ENCODE measurements at regions of chr19 and their contacts with region 1.

Region 1: DNA sequence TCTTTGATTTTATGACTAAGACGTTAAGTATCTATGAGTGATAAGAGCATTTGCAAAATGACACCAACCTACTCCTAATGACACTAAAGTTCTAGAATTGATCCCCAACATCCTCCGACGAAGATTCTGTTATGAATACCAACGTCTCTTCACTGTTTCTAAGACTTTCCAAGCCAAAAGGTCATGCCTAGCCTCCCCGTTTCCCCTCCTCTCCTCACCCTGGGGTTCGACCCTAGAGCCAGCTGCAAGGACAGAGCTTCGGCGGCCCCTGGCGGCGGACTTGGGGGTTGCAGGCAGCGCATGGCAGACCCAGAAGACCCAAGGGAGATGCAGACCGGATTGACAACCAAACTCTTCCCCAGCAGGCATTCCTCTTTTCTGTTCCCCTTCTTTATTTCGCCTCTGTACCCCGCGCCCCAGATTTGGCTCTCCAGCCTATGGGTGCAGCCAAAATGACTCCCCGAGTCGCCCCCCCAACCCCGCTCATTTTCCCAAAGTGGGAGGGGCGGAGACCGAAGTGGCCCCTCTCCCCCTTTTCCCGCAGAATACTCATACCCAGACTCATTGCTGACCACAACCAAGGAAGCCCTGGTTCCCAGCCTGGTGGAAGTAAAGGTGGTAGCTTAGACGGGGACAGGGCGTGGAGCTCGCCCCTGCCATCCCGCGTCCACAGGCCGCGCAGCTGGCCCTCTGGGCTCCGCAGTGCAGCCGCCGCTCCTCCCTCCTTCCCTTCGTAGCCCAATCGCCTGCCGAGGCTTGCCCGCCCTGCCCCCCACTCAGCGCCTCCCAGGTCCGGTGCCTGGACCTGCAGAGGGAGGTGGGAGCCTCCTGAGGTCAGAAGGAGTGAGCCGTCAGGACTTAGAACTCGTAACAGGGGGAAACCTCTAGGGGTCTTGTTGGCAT is 4.1 kb upstream of the EML2 start:
- DNase-seq: peak; percentile 83 to 91 (median 87)
- ATAC-seq: peak; percentile 32
- H3K4me3 ChIP-seq: no peak overlapping the region
- H3K27ac ChIP-seq: peak overlapping the region in 1 of 4 donors; percentile 89
- H3K4me1 ChIP-seq: peaks cover 58% of the 10 kb centered on the region
- H3K27me3 ChIP-seq: no peaks in the 10 kb centered on the region
- CTCF ChIP-seq: peak; percentile 91 to 99 (median 97)
- POLR2A ChIP-seq: no peak

Region 2: DNA sequence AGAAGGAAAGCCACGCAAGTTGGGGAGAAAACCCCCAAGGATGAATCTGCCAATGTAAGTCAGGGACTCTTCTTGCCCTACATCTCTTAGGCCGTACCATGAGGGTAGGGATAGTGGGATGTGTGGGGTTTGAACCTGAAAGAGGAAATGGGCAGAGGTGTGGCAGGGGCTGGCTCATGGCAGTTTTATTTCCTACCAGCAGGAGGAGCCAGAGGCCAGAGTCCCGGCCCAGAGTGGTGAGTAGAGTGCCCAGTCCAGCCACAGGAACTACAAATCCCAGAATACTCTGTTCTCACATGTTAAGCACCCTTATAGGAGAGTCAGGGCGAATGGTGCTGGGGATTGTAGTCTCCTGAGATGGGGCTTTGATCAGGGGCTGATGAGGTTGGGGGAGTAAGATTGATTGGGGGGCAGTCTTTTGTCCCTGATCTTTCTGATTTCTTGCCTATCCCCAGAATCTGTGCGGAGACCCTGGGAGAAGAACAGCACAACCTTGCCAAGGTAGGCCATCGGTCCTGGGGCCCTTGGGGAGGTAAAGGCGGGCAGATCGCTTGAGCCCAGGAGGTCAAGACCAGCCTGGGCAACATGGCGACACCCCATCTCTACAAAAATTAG is 119.5 kb before region 1 on chr19:
- intact Hi-C with region 1: loop called (anchors 10 kb)
- DNase-seq: peak; percentile 82 to 90 (median 84)
- ATAC-seq: peak; percentile 88
- H3K4me3 ChIP-seq: no peak overlapping the region
- H3K27ac ChIP-seq: peak overlapping the region in 2 of 4 donors; percentile 41 to 79
- H3K4me1 ChIP-seq: peaks cover 38% of the 10 kb centered on the region
- H3K27me3 ChIP-seq: no peaks in the 10 kb centered on the region
- CTCF ChIP-seq: peak; percentile 88 to 96 (median 93)
- POLR2A ChIP-seq: no peak

Region 3: GRCh38 chr19:45547976-45548609 is 95.2 kb before region 1 on chr19:
- intact Hi-C with region 1: no loop called
- DNase-seq: no peak
- ATAC-seq: no peak
- H3K4me3 ChIP-seq: no peak overlapping the region
- H3K27ac ChIP-seq: no peak overlapping the region
- H3K4me1 ChIP-seq: peaks cover 5% of the 10 kb centered on the region
- H3K27me3 ChIP-seq: no peaks in the 10 kb centered on the region
- CTCF ChIP-seq: no peak
- POLR2A ChIP-seq: no peak

Region 4: DNA sequence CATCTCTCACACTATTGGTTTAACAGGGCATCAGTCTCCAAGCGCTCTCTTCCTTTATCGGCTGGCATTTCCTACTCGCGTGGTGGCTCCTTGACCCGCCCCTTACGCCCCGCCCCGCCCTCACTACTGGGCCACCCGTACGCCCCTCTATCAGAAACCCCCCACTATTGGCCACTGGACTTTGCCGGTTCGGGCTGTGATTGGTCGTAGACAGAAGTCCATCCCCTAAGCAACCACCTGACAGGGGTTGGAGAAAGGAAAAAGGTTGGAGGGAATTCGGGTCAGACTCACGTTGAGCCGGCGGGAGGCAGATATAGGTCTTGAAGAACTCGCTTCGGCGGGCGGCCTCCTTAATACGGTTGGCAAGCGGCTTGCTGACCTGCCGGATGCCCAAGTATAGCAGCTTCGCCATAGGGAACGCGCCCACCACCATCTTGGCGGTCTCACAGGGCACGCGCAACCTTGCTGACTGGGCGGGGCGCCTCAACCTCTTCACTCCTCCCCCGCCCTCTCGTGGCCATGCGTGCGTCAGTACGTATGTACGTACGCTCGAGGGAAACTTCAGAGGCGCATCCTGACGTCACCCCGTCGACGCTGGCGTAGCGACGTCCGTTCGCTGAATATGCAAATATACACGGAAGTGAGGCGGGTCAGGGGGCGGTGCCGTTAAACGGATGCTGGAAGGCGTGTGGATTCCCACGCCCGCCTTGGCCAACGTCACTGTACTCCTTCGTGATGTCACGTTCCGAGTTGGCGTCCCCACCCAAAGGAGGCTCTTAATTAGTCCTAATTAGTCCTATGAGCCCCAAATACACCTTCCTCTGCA is 58.7 kb before region 1 on chr19 and contains the start of gene OPA3:
- intact Hi-C with region 1: loop called (anchors 5 kb)
- DNase-seq: peak; percentile 100
- ATAC-seq: peak; percentile 93
- H3K4me3 ChIP-seq: peak within 1 kb of the TSS; percentile 13 to 46
- H3K27ac ChIP-seq: peak within 1 kb of the TSS; percentile 91 to 99 (median 98)
- H3K4me1 ChIP-seq: peaks cover 13% of the 10 kb centered on the region
- H3K27me3 ChIP-seq: no peaks in the 10 kb centered on the region
- CTCF ChIP-seq: peak in 3 of 7 experiments; percentile 26 to 45 (median 31)
- POLR2A ChIP-seq: peak; percentile 46 to 90 (median 88)
- total RNA-seq, gene OPA3: 4.2 to 22.7 TPM

Region 5: DNA sequence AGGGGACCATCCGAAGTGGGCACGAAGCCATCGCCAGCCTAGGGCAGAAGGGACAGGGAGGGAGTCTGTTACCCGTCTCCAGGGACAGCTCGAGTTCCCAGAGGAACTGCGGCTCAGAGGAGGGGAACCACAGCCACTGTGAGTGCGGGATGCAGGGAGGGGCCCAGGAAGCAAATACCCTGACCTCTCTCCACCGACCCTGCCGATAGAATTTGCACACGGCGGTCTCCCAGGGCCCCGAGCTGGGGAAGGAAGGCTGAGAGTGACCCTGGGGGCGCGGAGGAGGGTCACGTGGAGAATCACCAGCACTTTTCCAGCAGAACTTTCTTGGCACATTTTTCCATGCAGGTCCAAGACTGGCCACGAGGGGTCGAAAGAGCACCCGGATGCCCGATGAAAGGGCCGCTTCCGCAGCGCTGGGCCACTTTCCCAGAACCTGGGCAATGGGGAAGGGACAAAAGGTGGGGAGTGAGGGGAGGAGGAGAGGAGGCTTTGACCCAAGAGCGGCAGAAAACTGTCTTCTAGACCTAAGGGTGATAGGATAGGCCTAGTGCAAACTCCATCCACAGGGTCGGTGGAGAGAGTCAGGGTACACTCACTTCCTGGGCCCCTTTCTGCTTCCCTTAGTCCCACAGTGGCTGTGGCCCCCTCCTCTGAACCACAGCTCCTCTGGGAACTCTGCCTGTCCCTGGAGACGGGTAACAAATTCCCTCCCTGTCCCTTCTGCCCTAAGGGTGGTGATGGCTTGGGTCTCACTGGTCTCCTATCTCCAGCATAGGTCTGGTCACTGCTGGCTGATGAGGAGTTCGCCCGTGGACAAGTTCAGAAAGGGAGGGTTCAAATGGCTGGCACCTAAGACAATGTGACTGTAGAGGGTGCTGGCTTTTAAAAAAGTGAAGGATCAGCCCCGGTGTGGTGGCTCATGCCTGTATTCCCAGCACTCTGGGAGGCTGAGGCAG is 35.9 kb before region 1 on chr19:
- intact Hi-C with region 1: loop called (anchors 5 kb)
- DNase-seq: peak; percentile 76 to 86 (median 82)
- ATAC-seq: peak; percentile 93
- H3K4me3 ChIP-seq: no peak overlapping the region
- H3K27ac ChIP-seq: peak overlapping the region in 1 of 4 donors; percentile 9
- H3K4me1 ChIP-seq: peaks cover 12% of the 10 kb centered on the region
- H3K27me3 ChIP-seq: peaks cover 0 to 3% of the 10 kb centered on the region in 2 donors
- CTCF ChIP-seq: peak; percentile 77 to 97 (median 94)
- POLR2A ChIP-seq: no peak

Region 6: GRCh38 chr19:45681391-45682015 is 38.2 kb after region 1 on chr19:
- intact Hi-C with region 1: no loop called
- DNase-seq: peak; percentile 91 to 93 (median 92)
- ATAC-seq: peak; percentile 77
- H3K4me3 ChIP-seq: no peak overlapping the region
- H3K27ac ChIP-seq: peak overlapping the region; percentile 80 to 89 (median 85)
- H3K4me1 ChIP-seq: peaks cover 35% of the 10 kb centered on the region
- H3K27me3 ChIP-seq: no peaks in the 10 kb centered on the region
- CTCF ChIP-seq: peak; percentile 96 to 99 (median 98)
- POLR2A ChIP-seq: peak; percentile 58 to 72 (median 68)

Region 7: GRCh38 chr19:45852145-45852750 is 209.0 kb after region 1 on chr19:
- intact Hi-C with region 1: no loop called
- DNase-seq: no peak
- ATAC-seq: no peak
- H3K4me3 ChIP-seq: no peak overlapping the region
- H3K27ac ChIP-seq: no peak overlapping the region
- H3K4me1 ChIP-seq: no peaks in the 10 kb centered on the region
- H3K27me3 ChIP-seq: no peaks in the 10 kb centered on the region
- CTCF ChIP-seq: no peak
- POLR2A ChIP-seq: no peak

Region 8: GRCh38 chr19:45927565-45928261 is 284.4 kb after region 1 on chr19:
- intact Hi-C with region 1: no loop called
- DNase-seq: peak; percentile 92 to 95 (median 94)
- ATAC-seq: peak; percentile 98
- H3K4me3 ChIP-seq: no peak overlapping the region
- H3K27ac ChIP-seq: no peak overlapping the region
- H3K4me1 ChIP-seq: peaks cover 6% of the 10 kb centered on the region
- H3K27me3 ChIP-seq: no peaks in the 10 kb centered on the region
- CTCF ChIP-seq: peak in 3 of 7 experiments; percentile 10 to 29 (median 27)
- POLR2A ChIP-seq: no peak